AG04450 (cell line): ENCODE measurements at regions of chr1 and their contacts with region 1.

Region 1: DNA sequence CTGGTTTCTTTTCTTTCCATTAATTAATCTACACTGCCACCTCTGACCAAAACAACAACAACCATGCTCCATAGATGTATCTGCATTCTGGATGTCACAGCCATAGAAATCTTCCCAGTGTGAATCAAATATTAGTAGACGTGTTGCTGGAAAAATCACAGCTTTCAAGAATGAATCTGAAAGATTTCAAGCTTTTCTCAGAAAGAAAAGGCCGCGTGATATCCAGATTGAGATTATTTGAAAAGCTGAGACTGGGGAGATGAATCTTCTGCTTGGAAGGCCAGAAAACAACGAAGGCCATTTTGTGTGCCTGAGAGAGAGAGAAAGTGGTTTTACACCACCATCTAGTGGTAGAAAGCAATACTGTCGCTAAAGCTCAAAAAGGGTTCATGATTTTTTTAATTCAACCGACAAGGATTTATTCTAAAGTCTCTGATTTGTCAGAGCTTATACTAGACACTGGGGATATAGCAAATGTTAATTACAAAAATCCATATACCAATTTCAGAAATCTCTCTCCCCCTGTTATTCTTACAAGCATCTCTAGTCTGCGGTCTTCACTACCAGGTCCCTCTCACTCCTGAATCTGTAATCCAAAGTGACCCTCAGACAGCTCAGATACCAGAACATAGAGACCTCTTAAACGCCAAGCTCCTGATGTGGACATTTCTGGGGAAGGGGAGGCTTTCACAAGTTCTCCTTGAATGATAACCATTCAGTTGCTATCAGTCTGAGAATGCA is 87.5 kb upstream of the SGIP1 start:
- DNase-seq: no peak
- H3K4me3 ChIP-seq: no peak overlapping the region
- H3K27ac ChIP-seq: no peak overlapping the region
- H3K27me3 ChIP-seq: no peaks in the 10 kb centered on the region
- CTCF ChIP-seq: peak; percentile 85

Region 2: GRCh38 chr1:65687428-65688214 is 758.8 kb before region 1 on chr1:
- CTCF ChIA-PET with region 1: interaction called, 10 read pairs
- POLR2A ChIA-PET with region 1: no interaction called
- DNase-seq: peak; percentile 36
- H3K4me3 ChIP-seq: no peak overlapping the region
- H3K27ac ChIP-seq: no peak overlapping the region
- H3K27me3 ChIP-seq: peaks cover 2% of the 10 kb centered on the region
- CTCF ChIP-seq: peak; percentile 91

Region 3: DNA sequence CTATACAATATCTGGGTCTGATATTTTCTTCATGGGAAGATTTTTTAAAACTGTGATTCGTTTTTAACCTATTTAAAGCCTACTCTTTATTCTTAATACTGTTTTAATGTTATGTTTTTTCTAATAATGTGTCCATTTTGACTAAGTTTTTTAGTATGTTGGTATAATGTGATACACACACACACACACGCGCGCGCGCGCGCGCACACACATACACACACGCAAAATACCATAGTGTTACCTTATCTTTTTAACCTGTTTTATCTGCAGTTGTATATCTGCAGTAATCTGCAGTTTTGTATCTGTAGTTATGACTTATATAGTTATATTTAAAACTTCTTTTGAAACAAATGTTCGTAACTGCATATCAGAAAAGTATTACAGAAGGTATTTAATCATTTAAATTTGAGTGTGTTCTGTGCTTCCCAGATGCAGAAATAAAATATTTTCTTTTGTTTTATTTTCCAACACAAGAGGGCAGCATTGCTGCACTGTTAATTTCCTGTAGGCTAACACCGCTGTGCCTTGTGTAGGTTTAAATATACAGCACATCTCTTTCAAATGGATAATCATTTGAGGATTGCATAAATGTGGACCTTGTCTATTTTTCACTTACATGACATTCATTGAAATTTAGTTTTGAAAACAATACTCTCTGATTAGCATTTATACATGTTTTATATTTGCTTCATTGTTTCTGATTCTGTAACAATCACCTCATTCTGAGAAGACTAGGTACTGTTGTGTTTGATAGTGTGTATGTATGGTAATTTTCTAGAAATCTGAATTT is 487.7 kb before region 1 on chr1:
- CTCF ChIA-PET with region 1: interaction called, 48 read pairs
- POLR2A ChIA-PET with region 1: no interaction called
- DNase-seq: peak; percentile 21
- H3K4me3 ChIP-seq: no peak overlapping the region
- H3K27ac ChIP-seq: no peak overlapping the region
- H3K27me3 ChIP-seq: no peaks in the 10 kb centered on the region
- CTCF ChIP-seq: peak; percentile 66

Region 4: DNA sequence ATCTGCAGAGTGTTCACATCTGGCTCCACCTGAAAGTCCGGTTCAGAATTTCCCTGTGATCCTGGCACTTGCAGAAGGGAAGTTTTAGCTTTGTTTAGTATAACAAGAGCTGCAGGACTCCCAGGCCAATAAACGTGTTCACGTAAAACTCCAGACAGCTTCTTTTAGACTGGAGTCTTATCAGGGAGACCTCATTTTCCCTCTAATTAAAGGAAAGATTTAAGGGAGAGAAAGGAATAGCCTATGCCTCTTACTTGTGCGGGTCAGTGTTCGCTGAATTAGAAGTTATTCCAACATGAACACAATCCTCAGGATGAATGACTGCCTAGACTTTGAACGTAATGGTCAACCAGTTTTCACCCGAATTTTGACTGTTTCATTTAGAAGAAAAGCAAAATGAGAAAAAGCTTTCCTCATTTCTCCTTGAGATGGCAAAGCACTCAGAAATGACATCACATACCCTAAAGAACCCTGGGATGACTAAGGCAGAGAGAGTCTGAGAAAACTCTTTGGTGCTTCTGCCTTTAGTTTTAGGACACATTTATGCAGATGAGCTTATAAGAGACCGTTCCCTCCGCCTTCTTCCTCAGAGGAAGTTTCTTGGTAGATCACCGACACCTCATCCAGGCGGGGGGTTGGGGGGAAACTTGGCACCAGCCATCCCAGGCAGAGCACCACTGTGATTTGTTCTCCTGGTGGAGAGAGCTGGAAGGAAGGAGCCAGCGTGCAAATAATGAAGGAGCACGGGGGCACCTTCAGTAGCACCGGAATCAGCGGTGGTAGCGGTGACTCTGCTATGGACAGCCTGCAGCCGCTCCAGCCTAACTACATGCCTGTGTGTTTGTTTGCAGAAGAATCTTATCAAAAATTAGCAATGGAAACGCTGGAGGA is 114.5 kb before region 1 on chr1:
- CTCF ChIA-PET with region 1: interaction called, 30 read pairs
- POLR2A ChIA-PET with region 1: no interaction called
- DNase-seq: peak; percentile 61
- H3K4me3 ChIP-seq: peak overlapping the region; percentile 72
- H3K27ac ChIP-seq: peak overlapping the region; percentile 90
- H3K27me3 ChIP-seq: no peaks in the 10 kb centered on the region
- CTCF ChIP-seq: peak; percentile 52

Region 5: DNA sequence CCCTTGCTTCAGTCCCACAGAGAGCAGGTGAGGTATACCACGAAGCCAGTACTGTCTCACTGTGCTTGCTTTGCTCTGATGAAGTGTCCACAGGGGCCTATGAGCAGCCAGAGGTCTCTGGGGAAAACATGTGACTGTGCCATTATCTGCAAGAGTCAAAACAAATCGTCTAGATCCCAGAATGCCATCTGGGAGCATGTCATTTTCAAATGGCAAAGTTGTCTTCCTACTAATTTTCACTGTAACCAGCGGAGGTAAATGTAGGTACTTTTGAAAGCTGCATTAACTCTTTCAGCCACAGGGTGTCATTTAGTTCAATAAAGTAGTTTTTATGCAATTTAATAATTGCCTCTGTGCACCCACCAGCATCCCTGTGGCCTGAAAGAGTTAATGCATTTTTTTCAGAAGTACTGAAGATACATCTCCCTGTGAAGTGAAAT is 86.1 kb before region 1 on chr1:
- CTCF ChIA-PET with region 1: interaction called, 10 read pairs
- POLR2A ChIA-PET with region 1: no interaction called
- DNase-seq: no peak
- H3K4me3 ChIP-seq: no peak overlapping the region
- H3K27ac ChIP-seq: no peak overlapping the region
- H3K27me3 ChIP-seq: no peaks in the 10 kb centered on the region
- CTCF ChIP-seq: no peak

Region 6: GRCh38 chr1:66490816-66491215 is 44.4 kb after region 1 on chr1:
- CTCF ChIA-PET with region 1: interaction called, 13 read pairs
- POLR2A ChIA-PET with region 1: no interaction called
- DNase-seq: no peak
- H3K4me3 ChIP-seq: no peak overlapping the region
- H3K27ac ChIP-seq: no peak overlapping the region
- H3K27me3 ChIP-seq: no peaks in the 10 kb centered on the region
- CTCF ChIP-seq: no peak

Region 7: GRCh38 chr1:66552829-66553228 is 106.4 kb after region 1 on chr1:
- CTCF ChIA-PET with region 1: no interaction called
- POLR2A ChIA-PET with region 1: no interaction called
- DNase-seq: no peak
- H3K4me3 ChIP-seq: no peak overlapping the region
- H3K27ac ChIP-seq: no peak overlapping the region
- H3K27me3 ChIP-seq: no peaks in the 10 kb centered on the region
- CTCF ChIP-seq: no peak

Region 8: GRCh38 chr1:66598670-66599069 is 152.2 kb after region 1 on chr1:
- CTCF ChIA-PET with region 1: no interaction called
- POLR2A ChIA-PET with region 1: no interaction called
- DNase-seq: peak; percentile 59
- H3K4me3 ChIP-seq: no peak overlapping the region
- H3K27ac ChIP-seq: no peak overlapping the region
- H3K27me3 ChIP-seq: no peaks in the 10 kb centered on the region
- CTCF ChIP-seq: no peak